Heart left ventricle (tissue), 16 donors: ENCODE measurements at regions of chr1 and their contacts with region 1.

Region 1: DNA sequence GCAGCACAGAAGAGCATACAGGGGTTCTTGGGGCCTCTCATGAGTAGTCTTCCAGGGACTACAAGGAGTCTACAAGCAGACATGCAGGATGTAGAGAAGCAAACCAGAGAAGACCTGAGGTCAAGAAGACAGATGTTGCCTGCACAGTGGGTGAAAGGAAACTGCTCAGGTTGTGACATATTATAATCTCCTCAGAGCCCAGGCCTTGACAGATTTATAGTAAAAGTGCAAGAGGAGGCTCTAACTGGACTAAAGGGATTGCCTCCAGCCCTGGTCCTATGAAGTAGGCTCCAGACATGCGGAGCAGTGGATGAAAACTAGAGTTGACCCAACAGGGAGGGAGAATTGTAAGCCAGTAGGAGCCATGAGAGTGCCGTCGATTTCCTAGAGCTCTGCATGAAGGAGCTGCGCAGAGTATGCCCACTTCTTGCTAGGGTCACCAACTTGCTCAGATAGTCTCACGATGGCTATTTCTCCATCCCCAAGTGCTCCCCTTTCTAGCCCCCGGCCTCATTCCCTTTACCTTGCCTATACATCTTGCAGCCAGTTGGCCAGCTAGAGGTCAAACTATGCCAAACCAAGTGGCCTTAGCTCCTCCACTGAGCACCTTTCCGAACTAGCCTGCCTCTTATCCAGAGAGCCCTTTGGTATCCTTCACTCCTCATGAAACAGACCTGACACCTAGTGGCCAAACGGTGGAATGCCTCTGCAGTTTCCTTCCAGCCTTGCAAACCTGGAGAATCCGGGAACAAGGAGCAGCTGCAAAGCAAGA is 36.2 kb upstream of the IPO9 start:
- DNase-seq: peak in 4 of 5 donors; percentile 64 to 79 (median 75)
- ATAC-seq: peak; percentile 75 to 81 (median 81)
- H3K4me3 ChIP-seq: no peak overlapping the region
- H3K27ac ChIP-seq: peak overlapping the region in 11 of 12 donors; percentile 59 to 93 (median 79)
- H3K4me1 ChIP-seq: peaks cover 24 to 75% (median 51%) of the 10 kb centered on the region in 12 donors
- H3K27me3 ChIP-seq: no peaks in the 10 kb centered on the region
- CTCF ChIP-seq: peak; percentile 90 to 98 (median 95)
- POLR2A ChIP-seq: no peak

Region 2: DNA sequence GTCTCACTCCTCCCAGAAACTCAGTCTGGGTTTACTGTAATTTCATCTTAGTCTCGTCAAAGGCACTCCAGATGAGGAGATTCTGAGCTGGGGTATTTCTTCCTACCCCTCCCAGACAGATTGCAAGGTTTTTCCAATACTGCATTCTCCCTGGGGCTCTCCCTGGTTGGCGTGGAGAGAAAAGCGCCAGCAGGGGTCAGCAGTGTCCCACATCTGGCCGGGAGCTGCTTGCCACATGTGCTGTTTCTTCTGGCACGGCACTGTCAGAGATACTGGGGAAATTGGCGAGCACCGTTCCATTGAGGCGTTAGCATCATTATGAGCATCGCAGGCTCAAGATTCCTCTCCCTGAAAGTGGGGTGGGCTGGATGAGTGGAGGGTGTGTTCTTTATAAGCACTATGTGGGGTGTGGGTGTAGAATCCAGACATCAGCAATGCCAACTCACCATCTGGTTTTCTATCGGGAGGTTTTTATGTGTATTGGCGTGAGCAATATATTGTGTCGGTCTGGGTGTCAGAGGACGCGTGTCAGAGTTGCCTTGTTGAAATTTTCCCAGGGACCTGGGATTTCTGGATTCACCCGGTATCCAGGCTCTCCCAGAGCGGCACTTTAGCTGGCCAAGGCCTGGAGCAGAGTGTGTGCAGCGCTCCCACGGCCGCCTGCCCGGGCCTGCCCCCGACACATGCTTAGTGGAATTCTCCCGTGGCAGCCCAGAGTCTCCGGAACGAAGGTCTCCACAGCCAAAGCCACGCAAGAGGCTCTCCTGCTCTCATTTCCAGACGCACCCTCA is 261.8 kb before region 1 on chr1:
- intact Hi-C with region 1: loop called in 7 of 10 experiments (anchors 2 to 5 kb)
- DNase-seq: peak; percentile 89 to 91 (median 90)
- ATAC-seq: peak; percentile 75 to 91 (median 88)
- H3K4me3 ChIP-seq: no peak overlapping the region
- H3K27ac ChIP-seq: peak overlapping the region; percentile 25 to 86 (median 64)
- H3K4me1 ChIP-seq: peaks cover 4 to 49% (median 35%) of the 10 kb centered on the region in 12 donors
- H3K27me3 ChIP-seq: no peaks in the 10 kb centered on the region
- CTCF ChIP-seq: peak; percentile 75 to 90 (median 82)
- POLR2A ChIP-seq: no peak

Region 3: GRCh38 chr1:201593200-201593921 is 199.4 kb before region 1 on chr1:
- intact Hi-C with region 1: no loop called
- DNase-seq: peak in 2 of 5 donors; percentile 48 to 64
- ATAC-seq: peak; percentile 33 to 86 (median 59)
- H3K4me3 ChIP-seq: no peak overlapping the region
- H3K27ac ChIP-seq: peak overlapping the region in 2 of 12 donors; percentile 19 to 56
- H3K4me1 ChIP-seq: peaks cover 0 to 42% (median 26%) of the 10 kb centered on the region in 12 donors
- H3K27me3 ChIP-seq: no peaks in the 10 kb centered on the region
- CTCF ChIP-seq: no peak
- POLR2A ChIP-seq: no peak

Region 4: DNA sequence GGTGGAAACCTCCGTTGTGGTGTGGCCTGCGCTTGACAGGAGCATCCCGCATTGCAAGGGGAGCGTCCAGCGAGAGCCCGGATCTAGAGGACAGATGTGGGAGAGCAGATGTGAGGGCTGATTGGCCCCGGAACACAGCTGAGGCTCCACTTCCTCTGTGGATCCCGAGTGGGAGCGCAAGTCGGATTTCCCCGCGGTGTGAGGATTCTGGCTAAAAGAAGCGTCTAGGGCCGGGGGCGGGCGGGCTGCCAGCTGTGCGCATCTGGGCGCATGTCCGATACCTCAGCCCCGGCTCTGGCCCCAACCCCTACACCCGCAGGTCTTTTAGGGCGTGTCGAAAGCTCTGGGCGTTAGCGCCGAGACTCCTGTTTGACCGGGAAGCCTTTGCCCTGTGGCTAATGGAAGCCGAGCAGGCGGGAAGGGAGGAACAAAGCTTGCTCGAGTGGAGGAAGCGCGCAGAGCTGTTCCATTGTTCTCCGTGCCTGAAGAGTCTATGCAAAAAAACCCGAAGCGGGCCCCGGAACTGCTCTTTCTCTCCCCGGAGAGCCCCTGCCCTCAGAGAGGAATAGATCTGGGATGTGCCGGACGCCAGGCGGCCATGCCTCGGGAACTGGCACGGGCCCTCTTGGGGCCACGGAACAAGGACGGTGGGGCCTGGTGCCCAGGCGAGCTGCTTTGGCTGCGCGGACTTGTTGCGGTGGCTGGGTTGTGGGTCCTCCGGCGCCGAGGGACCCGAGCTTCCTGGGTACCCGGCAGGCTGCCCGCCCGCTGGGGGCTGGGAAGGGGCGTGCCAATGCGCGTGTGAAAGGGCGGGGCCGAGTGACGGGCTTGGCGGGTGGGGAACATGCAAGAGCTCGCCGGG is 142.7 kb before region 1 on chr1:
- intact Hi-C with region 1: loop called in 2 of 10 experiments (anchors 5 to 10 kb)
- DNase-seq: peak; percentile 82 to 93 (median 87)
- ATAC-seq: peak; percentile 47 to 74 (median 70)
- H3K4me3 ChIP-seq: peak overlapping the region; percentile 36 to 93 (median 68)
- H3K27ac ChIP-seq: peak overlapping the region; percentile 18 to 94 (median 80)
- H3K4me1 ChIP-seq: peaks cover 4 to 86% (median 63%) of the 10 kb centered on the region in 12 donors
- H3K27me3 ChIP-seq: no peaks in the 10 kb centered on the region
- CTCF ChIP-seq: peak in 1 of 12 donors; percentile 17
- POLR2A ChIP-seq: peak in 1 of 2 donors; percentile 18

Region 5: DNA sequence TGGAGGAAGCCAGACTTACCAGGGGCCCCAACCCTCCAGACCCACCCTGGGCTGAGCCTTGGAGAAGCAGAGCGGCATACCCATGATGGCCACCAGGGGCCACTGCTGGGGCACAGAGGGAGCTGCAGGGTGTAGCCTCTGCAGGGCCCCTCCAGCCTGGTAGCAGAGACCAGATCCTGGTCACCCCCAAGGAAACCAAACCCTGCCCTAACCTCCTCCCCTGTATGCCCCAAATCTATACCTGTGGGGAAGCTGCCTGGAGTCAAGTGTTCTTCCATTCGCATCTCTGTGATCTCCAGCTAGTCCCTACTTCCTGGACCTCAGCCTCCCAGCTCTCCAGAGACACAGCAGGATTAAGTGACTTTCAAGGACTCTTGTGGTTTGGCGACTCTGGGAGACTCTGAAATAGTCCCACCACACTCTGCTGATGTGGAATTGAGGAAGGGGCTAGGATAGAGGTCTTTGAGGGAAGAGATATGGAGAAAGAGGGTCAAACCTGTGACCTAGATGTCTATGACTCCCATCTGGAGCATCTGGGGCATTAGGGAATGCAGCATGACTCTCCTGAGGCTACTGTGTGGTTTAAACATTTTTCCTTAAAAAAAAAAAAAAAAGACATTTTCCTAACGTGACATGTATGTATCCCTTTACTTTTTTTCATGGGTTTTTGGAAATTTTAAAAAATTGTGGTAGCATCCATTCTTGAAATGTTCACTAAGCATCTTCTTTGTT is 83.0 kb before region 1 on chr1:
- intact Hi-C with region 1: loop called (anchors 1 to 2 kb)
- DNase-seq: peak; percentile 78 to 91 (median 80)
- ATAC-seq: peak; percentile 40 to 63 (median 54)
- H3K4me3 ChIP-seq: no peak overlapping the region
- H3K27ac ChIP-seq: peak overlapping the region in 11 of 12 donors; percentile 2 to 98 (median 91)
- H3K4me1 ChIP-seq: peaks cover 21 to 76% (median 60%) of the 10 kb centered on the region in 12 donors
- H3K27me3 ChIP-seq: no peaks in the 10 kb centered on the region
- CTCF ChIP-seq: peak; percentile 93 to 99 (median 97)
- POLR2A ChIP-seq: peak in 1 of 2 donors; percentile 8

Region 6: GRCh38 chr1:201739492-201740085 is 53.1 kb before region 1 on chr1:
- intact Hi-C with region 1: loop called in 5 of 10 experiments (anchors 1 to 5 kb)
- DNase-seq: peak; percentile 70 to 82 (median 78)
- ATAC-seq: peak; percentile 34 to 75 (median 70)
- H3K4me3 ChIP-seq: peak overlapping the region; percentile 70 to 92 (median 81)
- H3K27ac ChIP-seq: peak overlapping the region; percentile 81 to 98 (median 89)
- H3K4me1 ChIP-seq: peaks cover 19 to 95% (median 72%) of the 10 kb centered on the region in 12 donors
- H3K27me3 ChIP-seq: no peaks in the 10 kb centered on the region
- CTCF ChIP-seq: peak in 1 of 12 donors; percentile 9
- POLR2A ChIP-seq: no peak

Region 7: GRCh38 chr1:201750939-201751338 is 41.8 kb before region 1 on chr1:
- intact Hi-C with region 1: loop called in 2 of 10 experiments (anchors 5 kb)
- DNase-seq: no peak
- ATAC-seq: no peak
- H3K4me3 ChIP-seq: no peak overlapping the region
- H3K27ac ChIP-seq: peak overlapping the region in 11 of 12 donors; percentile 1 to 73 (median 34)
- H3K4me1 ChIP-seq: peaks cover 13 to 100% (median 88%) of the 10 kb centered on the region in 12 donors
- H3K27me3 ChIP-seq: no peaks in the 10 kb centered on the region
- CTCF ChIP-seq: no peak
- POLR2A ChIP-seq: no peak